ENCODE measurements at regions of chr6 and their contacts with region 1.

Region 1: GRCh38 chr6:16964553-16965501 is 137.0 kb upstream of the STMND1 start:
- DNase-seq: peak; percentile 46
- CTCF ChIP-seq: peak; percentile 93

Region 2: GRCh38 chr6:16776394-16777017 is 188.3 kb before region 1 on chr6:
- in situ Hi-C with region 1: loop called (anchors 25 kb)
- DNase-seq: no peak
- CTCF ChIP-seq: no peak

Measured in GM13977 (cell line).